Astrocyte of the cerebellum (primary cell): ENCODE measurements at regions of chr12 and their contacts with region 1.

Region 1: GRCh38 chr12:100794441-100795173 is at the start of gene ANO4:
- DNase-seq: no peak
- H3K4me3 ChIP-seq: peak within 1 kb of the TSS; percentile 27
- CTCF ChIP-seq: no peak

Region 2: DNA sequence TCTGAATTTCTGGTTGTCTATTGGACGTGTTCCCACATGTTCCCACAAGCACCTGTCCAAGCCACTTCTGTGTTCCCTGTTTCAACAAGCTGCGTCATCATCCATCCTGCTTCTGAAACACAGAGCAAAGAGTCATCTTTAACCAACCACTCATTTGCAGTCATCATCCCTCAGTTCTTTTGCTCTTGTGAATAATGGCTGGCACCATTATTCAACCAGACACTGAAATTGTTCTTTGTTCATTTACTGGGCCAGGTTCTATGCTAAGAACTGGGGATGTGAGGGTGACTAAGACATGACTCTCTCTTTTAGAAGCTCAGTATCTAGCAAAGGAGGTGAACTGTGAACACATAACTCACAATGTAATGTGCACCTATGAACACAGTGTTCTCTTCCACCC is 40.8 kb before region 1 on chr12:
- in situ Hi-C with region 1: no loop called
- DNase-seq: no peak
- H3K4me3 ChIP-seq: no peak overlapping the region
- CTCF ChIP-seq: no peak

Region 3: DNA sequence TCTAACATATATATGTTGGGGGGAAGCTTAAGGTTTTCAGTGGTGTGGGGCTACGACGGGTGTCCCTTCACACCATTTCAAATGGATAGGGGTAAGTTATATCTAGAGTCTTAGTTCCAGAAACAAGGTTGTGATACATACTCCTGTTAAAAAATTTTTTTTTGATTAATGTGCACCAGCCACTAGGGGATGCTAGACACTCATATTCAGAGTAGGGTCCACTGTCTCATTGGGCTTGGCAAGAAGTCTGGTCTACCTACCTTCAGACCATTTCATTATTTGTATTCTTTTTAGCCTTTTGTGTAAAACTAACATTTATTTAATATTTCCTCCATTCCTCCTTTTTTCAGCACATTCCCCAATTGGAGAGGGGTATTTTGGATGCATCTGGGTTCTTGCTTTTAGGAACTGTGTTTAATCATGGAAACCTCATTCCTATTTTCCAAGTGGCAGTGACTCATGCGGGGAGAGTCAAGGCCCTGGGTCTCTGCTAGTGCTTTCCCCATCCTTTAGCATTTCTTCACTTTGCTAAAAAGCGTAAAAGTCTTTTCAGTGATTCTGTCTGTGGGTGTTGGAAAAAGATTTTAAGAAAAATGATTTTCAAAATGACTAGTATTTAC is 33.4 kb after region 1 on chr12:
- in situ Hi-C with region 1: loop called (anchors 5 kb)
- DNase-seq: peak; percentile 40
- H3K4me3 ChIP-seq: no peak overlapping the region
- CTCF ChIP-seq: peak; percentile 80